Mucosa of descending colon (tissue), 3 donors: ENCODE measurements at regions of chr3 and their contacts with region 1.

Region 1: GRCh38 chr3:196198771-196199753 is 12.1 kb downstream of the ZDHHC19 start:
- DNase-seq: peak in 1 of 3 donors; percentile 44
- ATAC-seq: peak; percentile 19
- H3K4me3 ChIP-seq: no peak overlapping the region
- H3K4me1 ChIP-seq: peaks cover 6% of the 10 kb centered on the region
- CTCF ChIP-seq: no peak

Region 2: DNA sequence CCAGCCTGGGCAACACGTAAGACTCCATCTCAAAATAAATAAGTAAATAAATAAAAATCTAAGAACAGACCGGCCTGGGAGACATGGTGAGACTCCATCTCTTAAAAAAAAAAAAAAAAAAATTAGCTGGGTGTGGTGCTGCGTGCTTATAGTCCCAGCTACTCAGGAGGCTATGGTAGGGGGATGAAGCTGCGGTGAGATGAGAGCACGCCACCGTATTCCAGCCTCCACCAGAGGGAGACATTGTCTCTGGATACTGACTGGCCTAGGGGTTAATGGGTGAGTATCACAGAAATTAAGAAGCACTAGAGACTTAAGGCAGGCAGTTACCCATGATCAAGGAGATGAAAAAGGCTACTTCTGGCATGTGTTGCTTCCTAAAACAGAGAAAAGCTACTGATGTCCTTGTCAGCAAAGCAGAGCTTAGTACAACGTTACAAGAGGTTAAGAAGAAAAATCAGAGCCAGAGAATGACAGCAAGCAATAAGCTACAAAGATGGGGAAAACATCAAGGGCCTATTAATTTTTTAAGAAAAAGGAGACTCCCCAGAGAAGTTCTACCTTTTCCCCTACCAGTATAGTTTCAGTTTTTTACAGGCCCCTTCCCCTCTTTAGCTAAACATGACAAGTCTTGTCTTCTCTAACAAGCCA is 125.7 kb before region 1 on chr3:
- intact Hi-C with region 1: loop called (anchors 5 kb)
- DNase-seq: peak in 1 of 3 donors; percentile 85
- ATAC-seq: peak; percentile 94
- H3K4me3 ChIP-seq: no peak overlapping the region
- H3K4me1 ChIP-seq: no peaks in the 10 kb centered on the region
- CTCF ChIP-seq: peak; percentile 52